Vagina (tissue), 2 donors: ENCODE measurements at regions of chr11 and their contacts with region 1.

Region 1: GRCh38 chr11:20080032-20080685 is 80.1 kb downstream of the DBX1 start:
- DNase-seq: no peak
- H3K4me3 ChIP-seq: no peak overlapping the region
- H3K27ac ChIP-seq: no peak overlapping the region
- H3K4me1 ChIP-seq: no peaks in the 10 kb centered on the region
- H3K27me3 ChIP-seq: no peaks in the 10 kb centered on the region
- CTCF ChIP-seq: no peak
- POLR2A ChIP-seq: no peak

Region 2: GRCh38 chr11:19027829-19028595 is 1052.1 kb before region 1 on chr11:
- intact Hi-C with region 1: loop called (anchors 5 kb)
- DNase-seq: no peak
- H3K4me3 ChIP-seq: no peak overlapping the region
- H3K27ac ChIP-seq: no peak overlapping the region
- H3K4me1 ChIP-seq: no peaks in the 10 kb centered on the region
- H3K27me3 ChIP-seq: no peaks in the 10 kb centered on the region
- CTCF ChIP-seq: no peak
- POLR2A ChIP-seq: no peak

Region 3: DNA sequence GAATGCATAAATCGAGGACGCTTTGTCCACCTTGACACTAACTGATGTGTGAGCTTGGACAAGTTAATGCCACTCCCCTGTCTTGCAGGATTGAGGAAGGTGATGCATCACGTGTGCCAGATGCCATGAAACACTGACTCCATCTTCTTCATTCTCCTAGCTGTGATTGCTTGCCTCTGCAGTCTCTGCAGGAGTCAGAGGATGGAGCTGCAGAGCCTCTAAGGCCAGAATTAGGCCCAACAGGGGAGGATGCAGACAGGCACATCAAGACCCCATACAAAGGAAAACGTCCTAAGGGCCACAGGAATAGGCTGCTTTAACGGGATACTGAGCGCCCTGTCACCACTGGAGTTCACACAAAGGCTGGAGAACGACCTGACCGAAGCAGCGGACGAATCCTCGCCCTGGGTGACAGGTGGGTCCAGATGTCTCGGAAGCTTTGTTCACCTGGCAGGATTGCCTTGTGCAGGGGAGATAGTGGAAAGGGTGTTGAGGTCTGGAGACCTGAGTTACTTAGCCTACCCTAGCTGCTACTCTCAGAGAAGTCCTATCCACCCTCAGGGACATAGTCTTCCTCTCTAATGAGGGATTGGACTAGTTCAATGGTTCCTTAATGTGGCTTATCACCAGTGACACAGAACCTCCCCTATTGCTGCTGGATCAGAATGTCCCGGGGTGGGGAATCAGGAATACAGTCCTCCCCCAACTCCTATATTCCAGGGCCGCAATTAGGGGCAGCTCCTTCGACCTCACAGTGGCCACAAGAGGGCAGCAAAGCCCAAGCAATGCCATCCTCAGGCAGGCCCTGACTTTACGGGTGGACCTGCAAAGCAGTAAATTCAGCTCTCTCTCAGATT is 47.7 kb after region 1 on chr11:
- intact Hi-C with region 1: no loop called
- DNase-seq: no peak
- H3K4me3 ChIP-seq: no peak overlapping the region
- H3K27ac ChIP-seq: no peak overlapping the region
- H3K4me1 ChIP-seq: peaks cover 5% of the 10 kb centered on the region
- H3K27me3 ChIP-seq: no peaks in the 10 kb centered on the region
- CTCF ChIP-seq: peak; percentile 62 to 80 (median 68)
- POLR2A ChIP-seq: no peak

Region 4: DNA sequence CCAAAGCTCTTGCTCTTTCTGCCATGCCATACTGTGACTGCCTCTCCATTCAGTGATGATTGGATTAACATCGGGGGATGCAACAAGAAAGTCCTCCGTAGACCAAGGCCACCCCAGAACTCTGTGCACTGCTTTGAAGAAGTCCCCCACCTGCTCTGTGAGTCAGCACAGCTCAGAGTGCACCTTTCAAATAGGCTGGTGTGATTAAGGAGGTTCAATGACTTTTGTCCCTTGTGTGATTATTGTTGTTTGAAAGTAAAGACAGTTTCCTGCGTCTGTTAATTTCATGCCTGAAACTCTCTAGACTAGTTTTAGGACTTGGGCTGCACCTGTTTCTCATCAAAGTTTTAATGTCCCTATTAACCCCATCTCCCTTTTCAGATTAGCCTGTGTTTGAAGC is 113.1 kb after region 1 on chr11:
- intact Hi-C with region 1: no loop called
- DNase-seq: no peak
- H3K4me3 ChIP-seq: no peak overlapping the region
- H3K27ac ChIP-seq: no peak overlapping the region
- H3K4me1 ChIP-seq: no peaks in the 10 kb centered on the region
- H3K27me3 ChIP-seq: no peaks in the 10 kb centered on the region
- CTCF ChIP-seq: no peak
- POLR2A ChIP-seq: no peak

Region 5: GRCh38 chr11:20226933-20227332 is 146.8 kb after region 1 on chr11:
- intact Hi-C with region 1: no loop called
- DNase-seq: no peak
- H3K4me3 ChIP-seq: no peak overlapping the region
- H3K27ac ChIP-seq: no peak overlapping the region
- H3K4me1 ChIP-seq: no peaks in the 10 kb centered on the region
- H3K27me3 ChIP-seq: no peaks in the 10 kb centered on the region
- CTCF ChIP-seq: no peak
- POLR2A ChIP-seq: no peak